Gastrocnemius medialis (tissue), 4 donors: ENCODE measurements at regions of chr10 and their contacts with region 1.

Region 1: DNA sequence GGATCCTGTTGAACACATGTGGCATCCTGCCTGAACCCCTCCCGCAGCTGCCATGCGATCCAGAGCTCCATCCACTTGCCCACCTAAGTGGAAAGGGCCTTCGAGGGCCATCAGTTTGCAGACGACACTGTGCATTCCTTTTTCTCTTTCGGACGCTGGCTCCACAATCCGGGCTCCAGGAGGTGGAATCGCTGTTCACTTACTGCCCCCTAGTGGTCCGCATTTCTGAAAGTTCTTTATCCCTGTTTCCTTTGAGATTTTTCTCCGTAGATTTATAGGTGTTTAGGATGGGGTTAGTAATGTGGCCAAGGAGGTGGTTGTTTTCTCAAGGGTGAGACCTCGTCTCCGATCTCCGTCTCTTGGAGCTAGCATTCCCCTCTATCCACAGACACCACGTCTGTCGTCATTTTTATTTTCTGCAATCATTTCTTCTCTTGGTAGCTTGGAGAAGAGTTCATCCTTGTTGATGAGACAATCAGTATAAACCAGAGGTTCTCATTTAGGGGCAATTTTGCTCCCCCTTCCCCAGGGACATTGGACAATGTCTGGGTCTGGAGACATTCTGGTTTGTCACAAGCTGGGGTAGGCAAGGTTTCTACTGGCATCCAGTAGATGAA is 204.6 kb downstream of the ARHGAP21 start:
- DNase-seq: peak; percentile 38 to 62
- ATAC-seq: peak; percentile 55 to 78
- H3K4me3 ChIP-seq: no peak overlapping the region
- H3K27ac ChIP-seq: peak overlapping the region; percentile 50 to 71 (median 66)
- H3K4me1 ChIP-seq: peaks cover 11 to 12% of the 10 kb centered on the region in 2 donors
- H3K27me3 ChIP-seq: no peaks in the 10 kb centered on the region
- CTCF ChIP-seq: peak; percentile 63 to 81 (median 78)
- POLR2A ChIP-seq: no peak

Region 2: DNA sequence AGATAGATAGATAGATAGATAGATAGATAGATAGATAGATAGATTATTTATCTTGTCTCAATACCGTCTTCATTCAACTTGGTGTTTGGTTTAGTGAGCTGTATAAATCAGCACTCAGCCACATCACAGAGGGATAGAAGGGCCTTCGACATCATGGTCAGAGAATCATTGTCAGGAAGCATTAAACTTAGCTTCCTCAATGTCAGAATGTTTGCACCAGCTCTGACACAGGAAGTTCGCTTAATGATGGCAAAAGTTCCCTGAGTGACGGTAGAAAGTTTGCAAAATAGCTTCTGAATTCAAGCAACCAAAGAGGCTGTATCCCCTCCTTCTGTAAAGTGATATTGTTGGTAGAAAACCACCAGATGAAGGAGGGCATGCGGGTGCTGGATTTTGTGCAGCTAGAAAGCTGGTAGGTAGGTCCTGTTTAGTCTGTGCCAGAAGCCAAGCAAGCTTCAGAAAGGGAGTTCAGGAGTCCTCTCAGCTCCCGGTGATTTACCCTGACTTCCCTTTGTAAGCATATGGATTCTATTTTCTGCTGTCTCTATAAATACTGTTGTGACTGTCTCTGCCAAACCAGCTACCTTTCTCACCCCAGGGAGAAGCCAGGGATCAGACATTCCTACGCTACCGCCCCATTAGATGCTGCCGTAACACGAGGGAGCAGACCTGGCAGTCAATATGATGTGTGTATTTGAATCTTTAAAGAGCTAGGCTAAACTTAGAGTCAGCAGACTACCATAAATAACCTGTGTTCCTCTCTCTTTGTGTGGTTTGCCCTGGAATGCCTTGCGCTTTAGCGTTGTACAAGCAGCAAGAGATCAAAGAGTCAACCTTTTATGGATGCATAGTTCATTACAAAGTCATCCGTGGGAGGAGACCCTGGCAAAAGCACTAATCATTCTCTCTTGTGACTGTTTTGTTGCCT is 510.7 kb before region 1 on chr10:
- in situ Hi-C with region 1: loop called in 1 of 4 experiments (anchors 10 kb)
- intact Hi-C with region 1: no loop called
- DNase-seq: peak in 1 of 2 donors; percentile 52
- ATAC-seq: peak; percentile 84 to 96
- H3K4me3 ChIP-seq: peak overlapping the region in 3 of 4 donors; percentile 1 to 32 (median 25)
- H3K27ac ChIP-seq: peak overlapping the region; percentile 62 to 83 (median 74)
- H3K4me1 ChIP-seq: peaks cover 16 to 19% of the 10 kb centered on the region in 2 donors
- H3K27me3 ChIP-seq: no peaks in the 10 kb centered on the region
- CTCF ChIP-seq: no peak
- POLR2A ChIP-seq: no peak

Region 3: DNA sequence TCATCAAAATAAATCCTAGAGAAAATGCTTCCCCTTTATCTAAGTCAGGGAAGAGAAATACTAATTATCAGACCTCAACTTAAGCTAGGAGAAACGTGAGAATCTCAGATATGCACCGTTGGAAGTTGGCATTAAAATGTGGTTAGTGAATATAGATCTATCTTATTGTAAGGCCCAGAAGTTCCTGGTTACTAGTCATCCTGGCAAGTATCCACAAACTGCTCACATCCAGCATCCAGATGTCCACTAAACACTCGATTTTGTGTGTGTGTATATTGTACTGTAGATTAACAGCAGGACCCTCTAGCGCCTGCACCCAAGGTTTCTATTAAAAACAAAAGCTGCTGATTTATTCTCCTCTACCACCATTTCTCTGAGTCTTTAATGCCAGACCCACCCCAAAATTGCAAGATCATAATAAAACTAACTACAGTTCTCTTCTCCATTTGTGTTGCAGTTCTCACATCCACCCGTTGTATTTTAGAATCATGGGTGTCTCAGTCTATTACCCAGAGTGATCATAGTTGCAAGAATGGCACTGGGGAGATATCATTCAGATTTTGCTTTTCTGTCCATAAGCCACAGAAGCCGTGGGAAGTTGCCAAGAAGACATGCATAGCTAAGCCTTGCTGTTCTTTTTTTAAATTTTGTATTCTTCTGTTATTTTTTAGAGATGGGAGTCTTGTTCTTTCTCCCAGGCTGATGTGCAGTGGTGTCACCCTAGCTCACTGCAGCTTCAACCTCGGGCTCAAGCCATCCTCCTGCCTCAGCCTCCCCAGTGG is 144.8 kb before region 1 on chr10:
- in situ Hi-C with region 1: loop called in 3 of 4 experiments (anchors 10 to 25 kb)
- intact Hi-C with region 1: loop called (anchors 2 kb)
- DNase-seq: no peak
- ATAC-seq: no peak
- H3K4me3 ChIP-seq: no peak overlapping the region
- H3K27ac ChIP-seq: peak overlapping the region in 2 of 4 donors; percentile 12 to 97
- H3K4me1 ChIP-seq: peaks cover 41% of the 10 kb centered on the region in 2 donors
- H3K27me3 ChIP-seq: no peaks in the 10 kb centered on the region
- CTCF ChIP-seq: no peak
- POLR2A ChIP-seq: no peak